ENCODE measurements at regions of chr2 and their contacts with region 1.

Region 1: GRCh38 chr2:121071034-121071504 is 213.9 kb downstream of the TFCP2L1 start:
- DNase-seq: peak; percentile 51
- H3K4me3 ChIP-seq: no peak overlapping the region
- H3K27ac ChIP-seq: no peak overlapping the region
- H3K4me1 ChIP-seq: no peaks in the 10 kb centered on the region
- CTCF ChIP-seq: peak; percentile 87

Region 2: GRCh38 chr2:120833127-120833675 is 237.9 kb before region 1 on chr2:
- CTCF ChIA-PET with region 1: no interaction called
- POLR2A ChIA-PET with region 1: no interaction called
- intact Hi-C with region 1: loop called (anchors 1 kb)
- DNase-seq: no peak
- H3K4me3 ChIP-seq: no peak overlapping the region
- H3K27ac ChIP-seq: no peak overlapping the region
- H3K4me1 ChIP-seq: no peaks in the 10 kb centered on the region
- CTCF ChIP-seq: peak; percentile 24; the same call in 1 of the 2 replicates

Region 3: DNA sequence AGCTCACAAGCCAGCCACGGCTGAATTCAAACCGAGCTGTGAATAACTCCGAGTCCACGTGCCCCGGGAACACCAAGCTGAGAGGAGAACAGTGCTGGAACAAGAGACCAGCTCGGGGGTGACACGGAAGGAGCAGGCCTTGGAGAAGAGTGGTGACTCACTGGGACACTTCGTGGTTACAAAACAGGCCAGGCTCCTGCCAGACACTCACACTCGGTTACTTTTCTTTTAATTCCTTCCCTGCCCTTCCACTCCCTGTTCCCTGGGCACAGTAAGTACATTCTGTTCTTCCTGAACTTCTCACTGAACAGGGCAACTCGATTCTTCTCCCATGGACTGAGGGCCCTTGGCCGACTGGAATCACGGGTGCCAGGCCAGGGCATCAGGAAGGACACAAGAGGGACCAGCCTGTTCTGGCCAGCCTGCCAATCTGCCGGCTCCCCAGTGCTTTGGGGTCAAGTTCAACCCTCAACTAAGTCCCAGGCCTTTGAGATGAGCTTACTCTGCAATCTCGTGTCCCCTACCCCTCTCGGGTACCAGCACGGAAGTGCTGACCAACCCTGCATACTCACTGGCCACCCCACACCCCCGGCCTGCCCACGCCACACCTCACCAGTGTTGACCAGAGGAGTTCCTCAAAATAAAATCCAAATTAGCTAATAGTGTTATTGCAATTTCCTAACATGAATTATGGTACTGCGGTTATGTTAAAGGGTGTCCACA is 126.5 kb after region 1 on chr2:
- CTCF ChIA-PET with region 1: no interaction called
- POLR2A ChIA-PET with region 1: no interaction called
- intact Hi-C with region 1: no loop called
- DNase-seq: no peak
- H3K4me3 ChIP-seq: no peak overlapping the region
- H3K27ac ChIP-seq: no peak overlapping the region
- H3K4me1 ChIP-seq: no peaks in the 10 kb centered on the region
- CTCF ChIP-seq: no peak

Measured in OCI-LY7 (cell line).